Endothelial cell of umbilical vein (primary cell): ENCODE measurements at regions of chr14 and their contacts with region 1.

Region 1: DNA sequence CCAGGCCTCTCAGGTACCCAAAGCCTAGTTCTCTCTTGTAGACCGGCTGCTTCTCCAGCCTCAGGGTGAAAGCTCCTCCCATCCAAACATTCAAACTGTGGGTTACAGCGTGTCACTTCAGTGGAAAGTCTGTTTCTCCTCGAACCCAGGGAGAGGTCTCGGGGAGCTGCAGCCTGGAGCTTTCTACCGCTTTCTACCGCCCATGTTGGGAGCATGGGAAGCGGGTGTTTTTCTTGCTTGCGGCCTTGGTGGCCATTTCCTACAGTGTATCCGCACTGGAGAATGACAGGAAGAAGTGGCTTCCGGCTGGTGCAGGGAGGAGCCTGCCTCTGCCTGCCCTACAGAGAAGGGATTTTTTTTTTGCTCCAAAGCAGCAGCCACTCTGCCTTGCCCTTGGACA is 21.3 kb downstream of the ZFP36L1 start:
- DNase-seq: peak; percentile 90
- H3K4me3 ChIP-seq: no peak overlapping the region
- H3K27ac ChIP-seq: peak overlapping the region; percentile 59
- H3K4me1 ChIP-seq: peaks cover 21% of the 10 kb centered on the region
- H3K27me3 ChIP-seq: no peaks in the 10 kb centered on the region
- CTCF ChIP-seq: no peak
- POLR2A ChIP-seq: peak; percentile 27

Region 2: DNA sequence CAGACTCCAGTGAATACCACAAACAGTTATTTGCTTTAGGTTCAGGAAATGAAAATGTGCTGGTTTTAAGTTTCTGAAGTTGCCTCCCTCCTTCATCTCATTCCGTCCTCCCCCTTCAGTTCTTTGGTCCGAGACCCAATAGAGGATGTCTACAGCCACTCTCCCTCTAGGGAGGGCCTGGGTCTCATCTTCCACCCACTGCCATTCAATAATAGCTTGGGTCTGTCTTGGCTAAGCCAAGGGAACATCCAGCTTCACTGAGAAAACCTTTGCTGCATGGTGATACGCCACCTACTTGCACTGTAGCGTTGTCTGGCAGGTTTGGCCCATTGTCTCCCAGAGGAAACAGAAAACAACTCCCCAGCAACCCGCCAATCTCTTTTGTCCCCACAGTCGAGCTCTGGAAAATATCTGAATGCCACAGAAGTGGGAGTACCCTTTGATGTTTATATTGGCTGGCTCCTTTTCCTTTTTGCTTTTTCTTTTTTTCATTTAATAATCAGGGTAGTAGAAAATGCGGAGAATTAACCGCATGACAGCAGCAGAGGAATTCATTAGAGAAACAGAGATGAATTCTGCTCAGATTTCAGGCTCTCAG is 572.0 kb before region 1 on chr14:
- CTCF ChIA-PET with region 1: no interaction called
- POLR2A ChIA-PET with region 1: no interaction called
- dilution Hi-C with region 1: no loop called
- intact Hi-C with region 1: loop called (anchors 1 kb)
- DNase-seq: peak; percentile 97
- H3K4me3 ChIP-seq: peak overlapping the region in 1 of 3 experiments; percentile 19
- H3K27ac ChIP-seq: peak overlapping the region; percentile 80
- H3K4me1 ChIP-seq: peaks cover 17% of the 10 kb centered on the region
- H3K27me3 ChIP-seq: no peaks in the 10 kb centered on the region
- CTCF ChIP-seq: peak; percentile 8 to 39
- POLR2A ChIP-seq: no peak